Psoas muscle (tissue), 8 donors: ENCODE measurements at regions of chr19 and their contacts with region 1.

Region 1: GRCh38 chr19:57320180-57321084 is at the start of gene ZNF543:
- DNase-seq: peak; percentile 97 to 98
- ATAC-seq: peak; percentile 97 to 99 (median 98)
- H3K4me3 ChIP-seq: peak within 1 kb of the TSS; percentile 84
- H3K27ac ChIP-seq: peak within 1 kb of the TSS; percentile 92
- H3K4me1 ChIP-seq: peaks cover 12% of the 10 kb centered on the region
- H3K27me3 ChIP-seq: peaks cover 0 to 3% (median 0%) of the 10 kb centered on the region in 3 donors
- CTCF ChIP-seq: no peak
- total RNA-seq, gene ZNF543: 6.7 to 6.8 (median 6.7) TPM

Region 2: GRCh38 chr19:57240311-57241090 is 79.9 kb before region 1 on chr19 and contains the start of gene ZNF805:
- intact Hi-C with region 1: loop called in 1 of 2 experiments (anchors 10 kb)
- DNase-seq: peak; percentile 97 to 99
- ATAC-seq: peak; percentile 99
- H3K4me3 ChIP-seq: peak within 1 kb of the TSS; percentile 97
- H3K27ac ChIP-seq: peak within 1 kb of the TSS; percentile 97
- H3K4me1 ChIP-seq: peaks cover 20% of the 10 kb centered on the region
- H3K27me3 ChIP-seq: no peaks in the 10 kb centered on the region
- CTCF ChIP-seq: peak; percentile 18
- total RNA-seq, gene ZNF805: 10.3 to 16.4 (median 12.7) TPM

Region 3: GRCh38 chr19:57279418-57280066 is 40.9 kb before region 1 on chr19:
- intact Hi-C with region 1: loop called (anchors 1 to 5 kb)
- DNase-seq: peak; percentile 92 to 94
- ATAC-seq: peak; percentile 93 to 95 (median 94)
- H3K4me3 ChIP-seq: peak overlapping the region; percentile 86
- H3K27ac ChIP-seq: peak overlapping the region; percentile 99
- H3K4me1 ChIP-seq: peaks cover 36% of the 10 kb centered on the region
- H3K27me3 ChIP-seq: no peaks in the 10 kb centered on the region
- CTCF ChIP-seq: peak; percentile 19

Region 4: GRCh38 chr19:57302020-57302465 is 18.4 kb before region 1 on chr19:
- intact Hi-C with region 1: loop called in 1 of 2 experiments (anchors 2 kb)
- DNase-seq: peak; percentile 74 to 89
- ATAC-seq: peak; percentile 96 to 98 (median 97)
- H3K4me3 ChIP-seq: no peak overlapping the region
- H3K27ac ChIP-seq: peak overlapping the region; percentile 68
- H3K4me1 ChIP-seq: peaks cover 19% of the 10 kb centered on the region
- H3K27me3 ChIP-seq: no peaks in the 10 kb centered on the region
- CTCF ChIP-seq: no peak

Region 5: GRCh38 chr19:57338877-57339276 is 18.4 kb after region 1 on chr19:
- intact Hi-C with region 1: no loop called
- DNase-seq: no peak
- ATAC-seq: peak; percentile 93 to 95 (median 94)
- H3K4me3 ChIP-seq: no peak overlapping the region
- H3K27ac ChIP-seq: peak overlapping the region; percentile 85
- H3K4me1 ChIP-seq: peaks cover 7% of the 10 kb centered on the region
- H3K27me3 ChIP-seq: no peaks in the 10 kb centered on the region
- CTCF ChIP-seq: no peak

Region 6: GRCh38 chr19:57350877-57351805 is 30.7 kb after region 1 on chr19 and contains the start of gene ZNF304:
- intact Hi-C with region 1: loop called in 1 of 2 experiments (anchors 2 kb)
- DNase-seq: peak; percentile 94 to 96
- ATAC-seq: peak; percentile 98
- H3K4me3 ChIP-seq: peak within 1 kb of the TSS; percentile 94
- H3K27ac ChIP-seq: peak within 1 kb of the TSS; percentile 88
- H3K4me1 ChIP-seq: peaks cover 14% of the 10 kb centered on the region
- H3K27me3 ChIP-seq: no peaks in the 10 kb centered on the region
- CTCF ChIP-seq: no peak
- total RNA-seq, gene ZNF304: 3.3 to 8.8 (median 6.8) TPM